Activated CD4-positive, alpha-beta T cell treated with anti-CD3 and anti-CD28 coated beads, Interleukin-2, amount 10 ng/mL, durations not matched to agents 7 days and 5 days (primary cell): ENCODE measurements at regions of chr11 and their contacts with region 1.

Region 1: GRCh38 chr11:119155733-119156492 is 7.1 kb downstream of the ABCG4 start:
- DNase-seq: no peak
- H3K4me3 Mint-ChIP-seq: no peak overlapping the region
- H3K27ac Mint-ChIP-seq: no peak overlapping the region
- H3K4me1 Mint-ChIP-seq: peaks cover 5% of the 10 kb centered on the region
- H3K27me3 Mint-ChIP-seq: peaks cover 24% of the 10 kb centered on the region

Region 2: GRCh38 chr11:119168471-119169281 is 12.8 kb after region 1 on chr11 and contains the start of gene NLRX1:
- CTCF ChIA-PET with region 1: interaction called, 26 read pairs
- POLR2A ChIA-PET with region 1: no interaction called
- DNase-seq: peak; percentile 90
- H3K4me3 Mint-ChIP-seq: peak within 1 kb of the TSS; percentile 91
- H3K27ac Mint-ChIP-seq: peak within 1 kb of the TSS; percentile 96
- H3K4me1 Mint-ChIP-seq: peaks cover 23% of the 10 kb centered on the region
- H3K27me3 Mint-ChIP-seq: no peaks in the 10 kb centered on the region
- total RNA-seq, gene NLRX1: 24.2 to 28.5 TPM